AG04449 (cell line): ENCODE measurements at regions of chr5 and their contacts with region 1.

Region 1: GRCh38 chr5:43543434-43543833 is 13.4 kb downstream of the PAIP1 start:
- DNase-seq: no peak
- H3K4me3 ChIP-seq: no peak overlapping the region
- CTCF ChIP-seq: no peak

Region 2: DNA sequence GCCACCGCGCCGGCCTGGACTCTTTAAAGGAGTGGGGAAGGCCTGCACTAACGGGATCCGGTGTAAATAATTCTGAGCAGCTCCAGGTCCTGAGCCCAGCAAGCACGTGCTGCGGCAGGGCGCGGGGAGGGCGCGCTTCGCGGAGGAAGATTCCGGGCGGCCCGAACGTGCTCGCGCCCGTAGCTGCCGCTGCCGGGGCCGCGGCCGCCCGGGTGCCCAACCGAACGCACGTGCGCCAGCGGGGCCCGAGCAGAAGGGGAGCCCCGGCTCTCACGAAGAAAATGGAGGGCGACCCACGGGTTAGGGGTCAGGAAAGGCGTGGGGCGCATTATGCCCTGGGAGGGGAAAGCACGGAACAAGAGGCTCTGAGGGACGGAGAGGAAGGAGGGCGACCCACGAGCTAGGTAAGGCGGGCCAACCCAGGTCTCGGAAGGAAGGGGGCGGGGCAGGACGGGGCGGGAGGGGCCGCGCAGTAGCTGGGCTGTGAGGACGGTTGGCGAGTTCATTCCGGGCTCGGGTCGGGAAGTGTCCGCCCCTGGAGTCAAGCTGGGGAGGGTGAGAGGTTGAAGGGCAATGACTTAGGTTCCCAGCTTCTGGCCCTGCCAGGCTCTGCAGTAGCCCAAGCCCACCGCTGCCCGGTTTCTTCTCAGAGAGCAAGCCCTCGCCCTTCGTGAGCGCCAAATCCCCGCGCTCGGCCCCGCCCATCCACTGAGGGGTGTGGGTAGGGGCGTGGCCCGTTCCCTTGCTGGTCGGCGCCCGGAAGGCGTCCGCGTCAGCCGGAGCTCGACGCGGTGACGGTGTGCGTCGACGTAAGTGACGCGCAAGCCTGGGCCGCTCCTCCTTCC is 422.5 kb before region 1 on chr5 and contains the start of gene ZNF131:
- CTCF ChIA-PET with region 1: no interaction called
- POLR2A ChIA-PET with region 1: no interaction called
- DNase-seq: peak; percentile 78
- H3K4me3 ChIP-seq: peak within 1 kb of the TSS; percentile 79
- CTCF ChIP-seq: no peak

Region 3: GRCh38 chr5:43556857-43557542 is 13.6 kb after region 1 on chr5 and contains the start of gene PAIP1:
- CTCF ChIA-PET with region 1: interaction called, 15 read pairs
- POLR2A ChIA-PET with region 1: interaction called, 3 read pairs
- DNase-seq: no peak
- H3K4me3 ChIP-seq: peak within 1 kb of the TSS; percentile 83
- CTCF ChIP-seq: peak; percentile 67

Region 4: DNA sequence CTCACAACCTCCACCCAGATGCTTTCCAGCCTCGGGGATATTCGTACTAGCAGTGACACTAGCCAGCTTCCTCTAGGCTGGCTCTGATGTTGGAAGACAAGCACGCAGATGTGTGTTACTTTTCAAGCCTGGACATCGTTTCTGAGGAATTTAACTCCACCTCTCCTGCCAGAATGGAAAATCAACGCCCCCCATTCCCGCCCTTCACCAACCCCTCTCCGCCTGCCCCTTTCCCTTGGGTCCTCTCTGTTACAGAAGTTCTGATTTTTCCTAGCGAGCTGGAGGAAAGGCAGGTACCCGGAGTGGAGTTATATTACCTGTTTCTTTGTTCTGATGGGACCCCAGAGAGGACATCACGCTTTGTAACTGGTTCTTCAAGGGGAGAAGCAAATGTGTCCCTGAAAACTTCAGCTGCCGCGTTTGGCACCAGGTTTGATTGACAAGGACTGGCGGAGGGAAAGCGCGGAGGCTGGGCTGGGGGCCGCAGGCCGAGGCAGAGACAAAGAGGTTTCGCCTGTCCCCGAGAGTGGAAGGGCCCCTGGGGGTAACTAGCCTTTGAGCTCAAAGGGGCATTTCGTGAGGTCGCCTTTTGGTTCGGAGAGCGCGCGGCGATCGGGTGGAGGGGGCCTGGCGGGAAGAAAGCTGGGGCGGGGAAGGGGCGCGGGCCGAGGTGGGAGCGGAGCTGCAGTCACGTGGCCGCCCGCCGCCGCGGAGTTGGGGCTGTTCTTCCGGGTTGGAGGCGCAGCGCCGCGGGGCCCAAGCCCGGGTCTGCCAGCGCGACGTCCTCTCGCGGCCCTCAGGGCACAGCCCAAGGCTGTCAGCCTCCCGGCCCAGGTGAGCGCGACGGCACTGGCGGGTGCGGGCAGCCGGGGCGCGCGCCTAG is 59.3 kb after region 1 on chr5 and contains the start of gene NNT:
- CTCF ChIA-PET with region 1: no interaction called
- POLR2A ChIA-PET with region 1: no interaction called
- DNase-seq: no peak
- H3K4me3 ChIP-seq: peak within 1 kb of the TSS; percentile 79
- CTCF ChIP-seq: no peak